CD4-positive, alpha-beta memory T cell (primary cell): ENCODE measurements at regions of chr3 and their contacts with region 1.

Region 1: DNA sequence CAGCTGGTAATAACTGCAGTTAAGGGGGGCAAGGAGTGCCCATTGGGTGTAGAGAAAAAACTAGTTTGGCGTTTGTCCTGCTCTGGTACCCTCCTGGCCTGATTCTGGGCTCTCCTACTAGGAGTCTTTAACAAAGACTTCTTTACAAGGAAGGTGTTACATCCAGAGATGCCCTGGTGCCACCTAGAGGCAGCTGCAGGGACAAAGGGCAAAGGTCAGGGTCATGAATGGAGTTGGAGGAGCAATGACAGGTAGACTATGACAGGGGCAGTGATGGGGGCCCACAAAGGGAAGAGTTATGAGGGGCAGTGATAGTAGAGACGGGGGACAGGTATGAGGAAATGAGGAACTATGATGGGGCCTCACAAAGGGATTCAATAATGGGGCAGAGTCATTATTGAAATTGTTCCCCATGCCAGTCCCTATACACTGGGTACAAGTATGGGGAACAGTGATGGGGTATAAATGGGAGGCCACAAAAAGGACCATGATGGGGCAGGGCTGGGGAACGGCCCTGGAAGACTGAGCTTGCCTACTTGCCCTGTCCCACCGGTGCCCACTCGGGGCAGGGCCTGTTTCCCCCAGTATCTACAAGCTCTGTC is 7.9 kb downstream of the CCDC71 start:
- DNase-seq: peak; percentile 54 to 77 (median 63)
- H3K4me3 ChIP-seq: no peak overlapping the region
- H3K4me3 Mint-ChIP-seq: no peak overlapping the region
- H3K27ac ChIP-seq: no peak overlapping the region
- H3K27ac Mint-ChIP-seq: peak overlapping the region; percentile 8 to 91 (median 64)
- H3K4me1 ChIP-seq: no peaks in the 10 kb centered on the region
- H3K4me1 Mint-ChIP-seq: peaks cover 2 to 11% (median 5%) of the 10 kb centered on the region in 4 donors
- H3K27me3 ChIP-seq: no peaks in the 10 kb centered on the region
- H3K27me3 Mint-ChIP-seq: no peaks in the 10 kb centered on the region

Region 2: DNA sequence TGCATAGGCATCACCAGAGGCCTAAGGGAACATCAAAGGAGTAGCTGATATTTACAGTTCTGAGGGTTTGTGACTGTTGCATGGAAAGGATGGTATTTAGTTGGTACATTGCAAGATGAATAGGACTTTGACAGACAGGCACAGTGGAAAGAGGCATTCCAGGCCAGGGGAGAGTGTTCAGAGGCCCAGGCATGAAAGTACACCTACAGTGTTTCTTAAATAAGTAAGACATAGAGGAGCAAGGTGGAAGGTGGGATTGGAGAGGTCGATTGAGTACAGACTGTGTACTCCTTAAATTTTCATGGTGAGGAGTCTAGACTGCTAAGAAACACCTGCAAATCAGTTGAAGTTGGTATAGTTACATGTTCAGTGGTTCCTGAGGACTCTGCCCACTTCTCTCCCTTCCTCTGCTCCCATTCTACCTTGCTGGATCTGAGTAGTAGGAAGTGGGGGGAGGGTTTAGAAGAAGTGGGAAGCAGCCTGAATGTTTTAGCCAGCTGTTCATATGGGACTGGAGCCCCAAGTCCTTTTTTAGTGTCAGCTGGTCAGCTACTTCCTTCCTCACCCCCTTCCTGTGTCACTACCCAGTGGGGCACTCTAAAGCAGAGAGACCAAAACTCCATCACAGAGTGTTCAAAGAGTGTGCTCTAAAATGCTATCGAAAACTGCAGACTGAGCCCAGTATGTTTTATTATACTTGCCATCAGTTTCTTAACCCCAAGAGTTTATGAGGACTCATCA is 1861.5 kb before region 1 on chr3:
- CTCF ChIA-PET with region 1: no interaction called
- POLR2A ChIA-PET with region 1: no interaction called
- intact Hi-C with region 1: no loop called
- DNase-seq: no peak
- H3K4me3 ChIP-seq: no peak overlapping the region
- H3K4me3 Mint-ChIP-seq: no peak overlapping the region
- H3K27ac ChIP-seq: no peak overlapping the region
- H3K27ac Mint-ChIP-seq: peak overlapping the region in 4 of 7 donors; percentile 29 to 78 (median 52)
- H3K4me1 ChIP-seq: peaks cover 12% of the 10 kb centered on the region
- H3K4me1 Mint-ChIP-seq: peaks cover 31 to 63% (median 46%) of the 10 kb centered on the region in 4 donors
- H3K27me3 ChIP-seq: no peaks in the 10 kb centered on the region
- H3K27me3 Mint-ChIP-seq: no peaks in the 10 kb centered on the region

Region 3: DNA sequence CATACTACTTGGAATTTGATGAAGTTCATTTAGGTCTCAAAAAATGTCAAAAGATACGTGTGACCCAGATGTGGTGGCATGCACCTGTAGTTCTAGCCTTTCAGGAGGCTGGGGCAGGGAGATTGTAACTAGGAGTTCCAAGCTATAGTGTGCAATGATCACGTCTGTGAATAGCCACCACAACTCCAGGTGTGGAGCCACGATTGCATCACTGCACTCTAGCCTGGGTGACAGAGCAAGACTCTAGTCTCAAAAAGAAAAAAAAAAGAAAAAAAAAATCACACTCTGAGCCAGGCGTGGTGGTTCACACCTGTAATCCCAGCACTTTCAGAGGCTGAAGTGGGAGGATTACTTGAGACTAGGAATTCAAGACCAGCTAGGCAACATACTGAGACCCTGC is 1156.2 kb before region 1 on chr3:
- CTCF ChIA-PET with region 1: no interaction called
- POLR2A ChIA-PET with region 1: no interaction called
- intact Hi-C with region 1: no loop called
- DNase-seq: no peak
- H3K4me3 ChIP-seq: no peak overlapping the region
- H3K4me3 Mint-ChIP-seq: no peak overlapping the region
- H3K27ac ChIP-seq: no peak overlapping the region
- H3K27ac Mint-ChIP-seq: no peak overlapping the region
- H3K4me1 ChIP-seq: no peaks in the 10 kb centered on the region
- H3K4me1 Mint-ChIP-seq: peaks cover 6 to 20% (median 12%) of the 10 kb centered on the region in 4 donors
- H3K27me3 ChIP-seq: no peaks in the 10 kb centered on the region
- H3K27me3 Mint-ChIP-seq: no peaks in the 10 kb centered on the region

Region 4: GRCh38 chr3:49021813-49022687 is 136.2 kb before region 1 on chr3 and contains the start of gene NDUFAF3:
- CTCF ChIA-PET with region 1: interaction called, 10 read pairs
- POLR2A ChIA-PET with region 1: interaction called, 6 read pairs
- intact Hi-C with region 1: loop called (anchors 5 kb)
- DNase-seq: peak; percentile 89 to 91 (median 90)
- H3K4me3 ChIP-seq: peak within 1 kb of the TSS; percentile 65 to 98
- H3K4me3 Mint-ChIP-seq: peak within 1 kb of the TSS; percentile 94 to 98 (median 96)
- H3K27ac ChIP-seq: peak within 1 kb of the TSS; percentile 97
- H3K27ac Mint-ChIP-seq: peak within 1 kb of the TSS; percentile 93 to 99 (median 98)
- H3K4me1 ChIP-seq: peaks cover 43% of the 10 kb centered on the region
- H3K4me1 Mint-ChIP-seq: peaks cover 16 to 74% (median 41%) of the 10 kb centered on the region in 4 donors
- H3K27me3 ChIP-seq: no peaks in the 10 kb centered on the region
- H3K27me3 Mint-ChIP-seq: no peaks in the 10 kb centered on the region
- total RNA-seq, gene NDUFAF3: 77.9 to 85.7 TPM

Region 5: DNA sequence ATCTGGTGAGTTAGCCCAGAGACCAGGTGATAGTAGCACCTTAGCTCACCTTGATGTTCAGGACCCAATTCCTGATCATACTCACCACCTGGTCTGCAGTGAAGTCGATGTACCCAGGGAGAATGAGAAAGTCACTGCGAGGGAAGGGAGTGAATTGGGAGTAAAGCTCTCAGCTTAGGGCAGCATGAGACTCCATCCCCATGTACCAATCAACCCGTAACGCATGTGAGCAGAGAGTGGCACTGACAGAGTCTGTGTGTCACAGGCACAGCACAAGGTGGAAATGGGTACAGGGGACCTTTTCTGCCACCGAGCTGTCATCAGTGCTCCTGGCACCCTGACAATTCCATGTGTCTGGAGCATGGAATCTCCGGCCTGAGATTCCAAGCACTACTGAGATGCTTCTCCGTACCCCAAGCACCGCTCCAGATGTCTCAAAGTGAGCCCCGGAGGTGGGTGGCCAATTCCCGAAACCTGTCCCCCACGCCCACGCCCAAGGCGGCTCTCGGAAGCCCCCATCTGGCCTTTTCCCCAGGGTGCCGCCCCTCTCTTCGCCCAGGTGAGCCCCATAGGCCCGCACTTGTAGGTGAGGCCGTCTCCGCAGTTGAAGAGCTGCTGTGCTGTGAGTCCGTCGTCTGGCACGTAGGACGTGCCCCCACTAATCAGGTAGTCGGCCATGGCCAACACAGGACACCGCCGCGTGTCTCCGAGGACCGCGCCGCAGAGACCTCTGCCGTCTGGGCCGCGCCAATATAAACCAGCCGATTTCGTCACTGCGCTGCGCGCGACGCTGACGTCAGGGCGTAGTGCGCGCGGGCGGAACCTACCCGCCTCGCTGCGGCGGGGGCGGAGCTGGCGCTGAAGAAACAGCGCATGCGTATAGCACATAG is 129.3 kb before region 1 on chr3 and contains the start of gene IMPDH2:
- CTCF ChIA-PET with region 1: no interaction called
- POLR2A ChIA-PET with region 1: interaction called, 6 read pairs
- intact Hi-C with region 1: loop called (anchors 5 kb)
- DNase-seq: peak; percentile 91 to 93 (median 93)
- H3K4me3 ChIP-seq: peak within 1 kb of the TSS; percentile 64 to 77
- H3K4me3 Mint-ChIP-seq: peak within 1 kb of the TSS; percentile 90 to 97 (median 92)
- H3K27ac ChIP-seq: peak within 1 kb of the TSS; percentile 93
- H3K27ac Mint-ChIP-seq: peak within 1 kb of the TSS; percentile 94 to 100 (median 99)
- H3K4me1 ChIP-seq: peaks cover 21% of the 10 kb centered on the region
- H3K4me1 Mint-ChIP-seq: peaks cover 17 to 52% (median 24%) of the 10 kb centered on the region in 4 donors
- H3K27me3 ChIP-seq: no peaks in the 10 kb centered on the region
- H3K27me3 Mint-ChIP-seq: no peaks in the 10 kb centered on the region
- total RNA-seq, gene IMPDH2: 87.5 to 89.6 TPM

Region 6: DNA sequence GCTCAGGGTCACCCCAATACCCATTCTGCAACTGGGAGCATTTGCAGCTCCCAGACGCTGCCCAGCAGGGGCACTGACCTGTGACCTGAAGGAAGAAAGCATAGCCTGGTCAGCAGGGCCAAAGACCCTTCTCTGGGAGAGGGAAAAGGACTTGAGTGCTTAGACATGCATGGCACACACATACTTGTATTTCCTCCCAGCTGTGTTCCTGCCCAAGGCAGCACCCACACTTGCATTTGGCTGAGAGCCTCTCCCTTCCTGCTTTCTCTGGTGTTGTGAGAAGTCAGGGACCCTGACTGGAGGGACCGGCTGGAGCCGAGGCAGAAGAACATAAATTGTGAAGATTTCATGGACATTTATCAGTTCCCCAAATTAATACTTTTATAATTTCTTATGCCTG is 18.1 kb before region 1 on chr3:
- CTCF ChIA-PET with region 1: interaction called, 10 read pairs
- POLR2A ChIA-PET with region 1: no interaction called
- intact Hi-C with region 1: no loop called
- DNase-seq: no peak
- H3K4me3 ChIP-seq: no peak overlapping the region
- H3K4me3 Mint-ChIP-seq: no peak overlapping the region
- H3K27ac ChIP-seq: no peak overlapping the region
- H3K27ac Mint-ChIP-seq: no peak overlapping the region
- H3K4me1 ChIP-seq: no peaks in the 10 kb centered on the region
- H3K4me1 Mint-ChIP-seq: no peaks in the 10 kb centered on the region
- H3K27me3 ChIP-seq: no peaks in the 10 kb centered on the region
- H3K27me3 Mint-ChIP-seq: peaks cover 8 to 13% of the 10 kb centered on the region in 2 donors

Region 7: DNA sequence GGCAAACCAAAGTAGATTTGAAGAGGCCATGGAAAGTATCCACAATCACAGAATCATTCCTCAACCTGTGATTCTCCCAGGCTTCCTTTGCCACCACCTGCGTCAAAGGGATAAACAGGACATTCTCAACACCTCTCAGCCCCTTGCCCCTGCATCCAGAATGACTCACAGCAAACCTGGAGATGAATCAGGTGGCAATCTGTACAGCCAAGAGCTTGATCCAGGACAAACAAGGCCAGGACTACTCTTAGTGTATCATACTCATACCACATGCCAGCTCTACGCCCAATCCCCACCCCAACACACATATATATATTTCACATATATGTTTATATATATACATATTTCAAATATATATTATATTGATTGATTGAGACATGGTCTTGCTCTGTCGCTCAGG is 142.4 kb after region 1 on chr3:
- CTCF ChIA-PET with region 1: no interaction called
- POLR2A ChIA-PET with region 1: no interaction called
- intact Hi-C with region 1: no loop called
- DNase-seq: no peak
- H3K4me3 ChIP-seq: no peak overlapping the region
- H3K4me3 Mint-ChIP-seq: no peak overlapping the region
- H3K27ac ChIP-seq: no peak overlapping the region
- H3K27ac Mint-ChIP-seq: peak overlapping the region in 2 of 7 donors; percentile 73 to 84
- H3K4me1 ChIP-seq: peaks cover 4% of the 10 kb centered on the region
- H3K4me1 Mint-ChIP-seq: peaks cover 0 to 7% (median under 1%) of the 10 kb centered on the region in 4 donors
- H3K27me3 ChIP-seq: no peaks in the 10 kb centered on the region
- H3K27me3 Mint-ChIP-seq: no peaks in the 10 kb centered on the region

Region 8: GRCh38 chr3:49638445-49638844 is 480.2 kb after region 1 on chr3:
- CTCF ChIA-PET with region 1: no interaction called
- POLR2A ChIA-PET with region 1: no interaction called
- intact Hi-C with region 1: no loop called
- DNase-seq: no peak
- H3K4me3 ChIP-seq: no peak overlapping the region
- H3K4me3 Mint-ChIP-seq: no peak overlapping the region
- H3K27ac ChIP-seq: no peak overlapping the region
- H3K27ac Mint-ChIP-seq: no peak overlapping the region
- H3K4me1 ChIP-seq: no peaks in the 10 kb centered on the region
- H3K4me1 Mint-ChIP-seq: peaks cover 0 to 1% (median 0%) of the 10 kb centered on the region in 4 donors
- H3K27me3 ChIP-seq: no peaks in the 10 kb centered on the region
- H3K27me3 Mint-ChIP-seq: no peaks in the 10 kb centered on the region